ENCODE measurements at regions of chr9 and their contacts with region 1.

Region 1: DNA sequence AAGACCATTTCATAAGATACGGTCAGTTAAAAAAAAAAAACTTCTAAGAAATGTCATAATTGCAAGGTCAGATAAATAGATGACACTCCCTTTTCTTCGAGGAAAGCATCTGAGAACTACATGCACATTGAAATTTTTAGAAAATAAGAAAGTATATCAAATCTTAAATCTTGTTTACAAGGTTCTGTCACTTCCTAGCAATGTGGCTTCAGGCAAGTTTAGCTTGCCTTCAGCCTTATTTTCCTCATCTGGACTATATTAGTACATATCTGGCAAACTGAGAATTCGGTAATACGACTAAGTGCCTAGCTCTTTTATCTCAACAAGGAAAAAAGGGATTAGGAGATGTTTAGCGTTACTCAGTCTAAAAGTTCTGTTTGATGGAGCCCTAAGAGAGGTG is 32.5 kb upstream of the OR2K2 start:
- DNase-seq: no peak
- ATAC-seq: no peak
- H3K4me3 ChIP-seq: no peak overlapping the region
- H3K27ac ChIP-seq: no peak overlapping the region
- H3K4me1 ChIP-seq: no peaks in the 10 kb centered on the region
- H3K27me3 ChIP-seq: no peaks in the 10 kb centered on the region
- CTCF ChIP-seq: no peak
- EP300 ChIP-seq: no peak
- POLR2A ChIP-seq: no peak
- RAD21 ChIP-seq: no peak

Region 2: GRCh38 chr9:111094433-111094924 is 268.0 kb before region 1 on chr9:
- CTCF ChIA-PET with region 1: no interaction called
- POLR2A ChIA-PET with region 1: no interaction called
- in situ Hi-C with region 1: no loop called
- intact Hi-C with region 1: no loop called
- DNase-seq: no peak
- ATAC-seq: no peak
- H3K4me3 ChIP-seq: no peak overlapping the region
- H3K27ac ChIP-seq: no peak overlapping the region
- H3K4me1 ChIP-seq: no peaks in the 10 kb centered on the region
- H3K27me3 ChIP-seq: no peaks in the 10 kb centered on the region
- CTCF ChIP-seq: no peak
- EP300 ChIP-seq: no peak
- POLR2A ChIP-seq: no peak
- RAD21 ChIP-seq: no peak

Region 3: GRCh38 chr9:113317777-113318176 is 1955.3 kb after region 1 on chr9:
- CTCF ChIA-PET with region 1: no interaction called
- POLR2A ChIA-PET with region 1: no interaction called
- in situ Hi-C with region 1: no loop called
- intact Hi-C with region 1: loop called (anchors 10 kb)
- DNase-seq: peak; percentile 9
- ATAC-seq: peak; percentile 59; the same call in 2 of the 3 replicates
- H3K4me3 ChIP-seq: no peak overlapping the region
- H3K27ac ChIP-seq: no peak overlapping the region
- H3K4me1 ChIP-seq: no peaks in the 10 kb centered on the region
- H3K27me3 ChIP-seq: no peaks in the 10 kb centered on the region
- CTCF ChIP-seq: no peak
- EP300 ChIP-seq: no peak
- POLR2A ChIP-seq: no peak
- RAD21 ChIP-seq: no peak

Measured in HepG2 (cell line).